ENCODE measurements at regions of chr5 and their contacts with region 1.

Region 1: GRCh38 chr5:116068028-116068632 is 16.7 kb upstream of the COMMD10 start:
- DNase-seq: peak; percentile 74
- H3K4me3 ChIP-seq: no peak overlapping the region
- H3K27ac ChIP-seq: no peak overlapping the region
- H3K4me1 ChIP-seq: no peaks in the 10 kb centered on the region
- CTCF ChIP-seq: peak; percentile 98

Region 2: GRCh38 chr5:115634343-115635132 is 433.6 kb before region 1 on chr5:
- CTCF ChIA-PET with region 1: no interaction called
- POLR2A ChIA-PET with region 1: interaction called, 9 read pairs
- intact Hi-C with region 1: loop called (anchors 1 kb)
- DNase-seq: peak; percentile 86
- H3K4me3 ChIP-seq: peak overlapping the region; percentile 15
- H3K27ac ChIP-seq: no peak overlapping the region
- H3K4me1 ChIP-seq: peaks cover 8% of the 10 kb centered on the region
- CTCF ChIP-seq: peak; percentile 95

Region 3: DNA sequence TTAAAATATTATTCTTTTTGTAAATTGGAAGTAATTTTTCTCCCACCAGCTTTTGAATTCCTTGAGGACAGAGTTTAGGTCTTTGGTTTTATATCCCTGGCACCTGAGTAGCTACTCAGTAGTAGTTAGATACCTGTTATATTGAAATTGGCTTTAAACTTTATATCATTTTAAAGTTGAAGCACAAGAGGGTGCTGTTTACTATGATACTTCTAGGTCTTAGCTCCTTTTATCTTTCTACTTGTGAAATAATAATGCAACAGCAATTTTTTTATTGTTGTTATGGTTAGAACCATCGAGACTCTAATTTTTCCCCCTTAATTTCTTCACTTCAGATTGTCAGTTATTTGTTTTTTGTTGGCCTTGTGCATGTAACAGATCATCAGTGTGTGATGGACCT is 180.1 kb before region 1 on chr5:
- CTCF ChIA-PET with region 1: no interaction called
- POLR2A ChIA-PET with region 1: no interaction called
- intact Hi-C with region 1: loop called (anchors 5 kb)
- DNase-seq: no peak
- H3K4me3 ChIP-seq: no peak overlapping the region
- H3K27ac ChIP-seq: no peak overlapping the region
- H3K4me1 ChIP-seq: no peaks in the 10 kb centered on the region
- CTCF ChIP-seq: peak; percentile 61

Region 4: GRCh38 chr5:116137544-116138378 is 69.6 kb after region 1 on chr5:
- CTCF ChIA-PET with region 1: no interaction called
- POLR2A ChIA-PET with region 1: no interaction called
- intact Hi-C with region 1: no loop called
- DNase-seq: peak; percentile 61
- H3K4me3 ChIP-seq: no peak overlapping the region
- H3K27ac ChIP-seq: no peak overlapping the region
- H3K4me1 ChIP-seq: no peaks in the 10 kb centered on the region
- CTCF ChIP-seq: peak; percentile 93

Region 5: DNA sequence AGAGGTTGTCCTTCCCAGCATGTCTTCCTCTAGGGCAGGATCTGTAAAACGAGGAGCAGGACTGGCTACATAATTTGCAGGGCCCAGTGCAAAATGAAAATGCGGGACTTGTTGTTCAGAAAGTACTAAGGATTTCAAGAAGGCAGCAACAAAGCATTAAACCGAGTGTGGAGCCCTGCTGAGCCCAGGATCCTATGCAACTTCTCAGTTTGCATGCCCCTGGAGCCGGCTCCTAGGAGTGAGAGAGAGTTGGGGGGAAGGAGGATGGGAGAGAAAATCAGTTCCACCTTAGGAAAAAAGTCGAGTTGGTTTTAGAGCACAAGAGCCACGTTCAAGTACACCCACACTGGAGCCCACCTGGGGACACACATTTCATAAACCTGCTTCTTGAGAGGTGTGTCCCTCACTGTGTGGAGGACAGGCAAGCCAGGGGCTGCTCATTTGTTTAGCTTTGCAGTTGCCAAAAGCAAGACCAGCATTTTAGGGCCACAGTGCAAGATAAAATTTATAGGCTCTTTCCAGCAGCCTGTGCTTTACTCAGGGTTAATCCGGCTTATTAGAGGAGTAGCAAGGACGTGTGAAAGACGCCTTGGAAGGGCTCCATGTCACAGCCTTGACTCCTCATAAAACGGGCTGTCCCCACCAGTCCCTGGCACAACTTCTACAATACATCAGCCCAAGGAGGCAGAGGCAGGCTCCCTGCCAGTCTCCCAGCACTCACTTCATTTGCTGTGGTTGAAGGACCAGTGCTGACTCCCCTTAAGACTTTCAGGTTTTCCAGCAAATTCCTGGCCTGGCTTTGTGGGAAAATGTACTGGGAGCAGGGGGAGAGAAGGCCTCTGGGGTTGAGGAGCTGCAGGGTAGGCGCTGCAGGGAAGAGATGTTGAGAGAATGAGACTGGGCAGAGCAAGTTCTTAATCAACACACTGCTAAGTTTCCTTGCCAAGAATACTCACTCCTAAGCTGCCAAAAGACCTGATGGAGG is 666.2 kb after region 1 on chr5:
- CTCF ChIA-PET with region 1: no interaction called
- POLR2A ChIA-PET with region 1: no interaction called
- intact Hi-C with region 1: no loop called
- DNase-seq: no peak
- H3K4me3 ChIP-seq: no peak overlapping the region
- H3K27ac ChIP-seq: no peak overlapping the region
- H3K4me1 ChIP-seq: no peaks in the 10 kb centered on the region
- CTCF ChIP-seq: no peak

Measured in OCI-LY7 (cell line).